ENCODE measurements at regions of chr11 and their contacts with region 1.

Region 1: GRCh38 chr11:67507864-67508485 is at the start of gene CDK2AP2:
- DNase-seq: peak; percentile 99
- CTCF ChIP-seq: no peak

Region 2: GRCh38 chr11:67382276-67383136 is 125.5 kb before region 1 on chr11:
- in situ Hi-C with region 1: loop called (anchors 10 kb)
- DNase-seq: peak; percentile 86
- CTCF ChIP-seq: peak; percentile 88

Measured in GM13976 (cell line).